Activated T-helper 1 cell treated with anti-CD3 and anti-CD28 coated beads, Interleukin-12 subunit alpha, Interleukin-12 subunit beta, Interleukin-2, Interleukin-4 antibody, amounts not matched to agents 30 ng/mL and 10 ng/mL and 1 ng/mL, durations not matched to agents 14 hours and 24 hours and 36 hours (primary cell): ENCODE measurements at regions of chr3 and their contacts with region 1.

Region 1: GRCh38 chr3:100068826-100069225 is 45.5 kb downstream of the FILIP1L start:
- DNase-seq: peak; percentile 73
- H3K4me3 Mint-ChIP-seq: no peak overlapping the region
- H3K27ac Mint-ChIP-seq: no peak overlapping the region
- H3K4me1 Mint-ChIP-seq: peaks cover 42% of the 10 kb centered on the region
- H3K27me3 Mint-ChIP-seq: no peaks in the 10 kb centered on the region

Region 2: DNA sequence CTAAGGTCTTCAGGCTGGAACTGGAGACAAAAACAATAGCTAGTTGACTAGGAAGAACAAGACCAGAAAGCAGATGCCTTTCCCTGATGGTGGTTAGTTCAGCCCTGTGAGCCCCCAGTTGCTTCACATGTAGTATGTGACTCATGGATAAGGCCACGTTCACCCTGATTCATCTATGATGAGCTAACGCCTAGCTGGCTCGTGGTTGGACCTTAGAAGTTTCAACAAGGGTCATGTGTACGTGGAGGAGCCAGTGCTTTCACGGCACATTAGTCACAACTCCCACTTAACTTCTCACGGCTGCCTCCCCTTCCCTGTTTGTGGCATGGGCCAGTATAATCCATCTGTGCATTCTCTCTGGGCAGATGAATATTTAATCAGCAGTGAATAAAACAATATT is 409.8 kb before region 1 on chr3:
- intact Hi-C with region 1: no loop called
- DNase-seq: no peak
- H3K4me3 Mint-ChIP-seq: no peak overlapping the region
- H3K27ac Mint-ChIP-seq: no peak overlapping the region
- H3K4me1 Mint-ChIP-seq: no peaks in the 10 kb centered on the region
- H3K27me3 Mint-ChIP-seq: no peaks in the 10 kb centered on the region

Region 3: DNA sequence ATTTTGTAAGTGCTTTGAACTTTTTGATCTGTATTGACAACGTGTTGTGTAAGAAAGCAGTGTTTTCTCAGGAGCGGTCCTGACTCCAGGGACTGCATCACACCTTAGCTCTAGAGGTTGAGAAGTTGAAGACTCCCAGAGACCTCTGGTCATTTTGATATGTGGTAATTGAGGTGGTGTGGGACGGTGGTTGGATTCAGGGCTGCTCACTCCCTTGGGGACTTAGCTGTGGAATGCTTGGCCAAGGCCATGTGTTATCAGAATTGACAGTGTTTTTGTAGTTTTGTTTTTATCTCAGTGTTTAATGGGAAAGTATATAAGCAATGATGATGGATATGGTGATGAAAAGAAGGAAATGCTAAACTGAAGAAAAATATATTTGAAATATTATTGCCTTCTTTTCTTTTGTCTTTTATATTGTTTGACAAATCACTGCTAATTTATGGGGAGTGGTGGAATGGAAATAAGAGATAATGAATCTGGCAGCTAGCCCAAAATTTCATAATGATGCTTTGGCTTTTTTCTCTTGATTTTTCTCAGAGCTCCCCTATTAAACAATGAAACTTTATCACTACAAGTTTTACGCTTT is 235.1 kb before region 1 on chr3:
- intact Hi-C with region 1: loop called (anchors 2 kb)
- DNase-seq: no peak
- H3K4me3 Mint-ChIP-seq: no peak overlapping the region
- H3K27ac Mint-ChIP-seq: no peak overlapping the region
- H3K4me1 Mint-ChIP-seq: peaks cover 12% of the 10 kb centered on the region
- H3K27me3 Mint-ChIP-seq: no peaks in the 10 kb centered on the region

Region 4: GRCh38 chr3:99842826-99843589 is 225.8 kb before region 1 on chr3:
- intact Hi-C with region 1: loop called (anchors 1 kb)
- DNase-seq: no peak
- H3K4me3 Mint-ChIP-seq: no peak overlapping the region
- H3K27ac Mint-ChIP-seq: peak overlapping the region; percentile 31
- H3K4me1 Mint-ChIP-seq: peaks cover 26% of the 10 kb centered on the region
- H3K27me3 Mint-ChIP-seq: no peaks in the 10 kb centered on the region

Region 5: GRCh38 chr3:100254168-100254777 is 185.4 kb after region 1 on chr3:
- intact Hi-C with region 1: loop called (anchors 1 kb)
- DNase-seq: peak; percentile 31
- H3K4me3 Mint-ChIP-seq: no peak overlapping the region
- H3K27ac Mint-ChIP-seq: no peak overlapping the region
- H3K4me1 Mint-ChIP-seq: peaks cover 5% of the 10 kb centered on the region
- H3K27me3 Mint-ChIP-seq: no peaks in the 10 kb centered on the region